K562 (cell line): ENCODE measurements at regions of chr11 and their contacts with region 1.

Region 1: GRCh38 chr11:78139422-78140391 is at the start of gene ALG8:
- DNase-seq: peak; percentile 98 to 99 (median 98)
- ATAC-seq: peak; percentile 96
- H3K4me3 ChIP-seq: peak within 1 kb of the TSS; percentile 59
- H3K27ac ChIP-seq: peak within 1 kb of the TSS; percentile 91
- H3K4me1 ChIP-seq: peaks cover 15 to 17% of the 10 kb centered on the region in 2 experiments; a peak in 4 of 5 replicates
- H3K27me3 ChIP-seq: no peaks in the 10 kb centered on the region
- CTCF ChIP-seq: no peak
- EP300 ChIP-seq: peak; percentile 36; the same call in 1 of the 2 replicates
- POLR2A ChIP-seq: peak; percentile 94
- RAD21 ChIP-seq: no peak
- polyA plus RNA-seq, gene ALG8: 176 to 189 TPM

Region 2: GRCh38 chr11:77959434-77959833 is 180.3 kb before region 1 on chr11:
- CTCF ChIA-PET with region 1: no interaction called
- POLR2A ChIA-PET with region 1: no interaction called
- in situ Hi-C with region 1: no loop called
- intact Hi-C with region 1: no loop called
- DNase-seq: no peak
- ATAC-seq: peak; percentile 18
- H3K4me3 ChIP-seq: no peak overlapping the region
- H3K27ac ChIP-seq: no peak overlapping the region; the same call in 2 of the 3 replicates
- H3K4me1 ChIP-seq: peaks cover 0 to 15% of the 10 kb centered on the region in 2 experiments; a peak in 2 of 5 replicates
- H3K27me3 ChIP-seq: no peaks in the 10 kb centered on the region
- CTCF ChIP-seq: no peak
- EP300 ChIP-seq: no peak
- POLR2A ChIP-seq: no peak
- RAD21 ChIP-seq: no peak

Region 3: GRCh38 chr11:78079232-78080083 is 60.2 kb before region 1 on chr11 and contains the start of gene NDUFC2:
- CTCF ChIA-PET with region 1: no interaction called
- POLR2A ChIA-PET with region 1: interaction called, 12 read pairs
- in situ Hi-C with region 1: no loop called
- intact Hi-C with region 1: loop called (anchors 2 kb)
- DNase-seq: peak; percentile 79 to 92 (median 80)
- ATAC-seq: peak; percentile 83
- H3K4me3 ChIP-seq: peak within 1 kb of the TSS; percentile 92
- H3K27ac ChIP-seq: peak within 1 kb of the TSS; percentile 90
- H3K4me1 ChIP-seq: peaks cover 23 to 35% of the 10 kb centered on the region in 2 experiments
- H3K27me3 ChIP-seq: no peaks in the 10 kb centered on the region
- CTCF ChIP-seq: 0 out of 6 replicates have a peak, but pooled peaks of 1 of the 3 experiments have one; percentile 1
- EP300 ChIP-seq: peak; percentile 74
- POLR2A ChIP-seq: peak; percentile 91
- RAD21 ChIP-seq: 0 out of 4 replicates have a peak, but pooled peaks of 1 of the 2 experiments have one; percentile 8
- polyA plus RNA-seq, gene NDUFC2: 987 to 1,119 TPM